Natural killer cell (primary cell): ENCODE measurements at regions of chr6 and their contacts with region 1.

Region 1: GRCh38 chr6:163501026-163501425 is 86.5 kb downstream of the QKI start:
- DNase-seq: no peak
- ATAC-seq: no peak
- H3K4me3 ChIP-seq: no peak overlapping the region
- H3K4me3 Mint-ChIP-seq: no peak overlapping the region
- H3K27ac ChIP-seq: no peak overlapping the region
- H3K27ac Mint-ChIP-seq: no peak overlapping the region
- H3K4me1 ChIP-seq: no peaks in the 10 kb centered on the region
- H3K4me1 Mint-ChIP-seq: peaks cover 57 to 63% of the 10 kb centered on the region in 2 donors
- H3K27me3 ChIP-seq: no peaks in the 10 kb centered on the region
- H3K27me3 Mint-ChIP-seq: no peaks in the 10 kb centered on the region
- CTCF ChIP-seq: no peak

Region 2: DNA sequence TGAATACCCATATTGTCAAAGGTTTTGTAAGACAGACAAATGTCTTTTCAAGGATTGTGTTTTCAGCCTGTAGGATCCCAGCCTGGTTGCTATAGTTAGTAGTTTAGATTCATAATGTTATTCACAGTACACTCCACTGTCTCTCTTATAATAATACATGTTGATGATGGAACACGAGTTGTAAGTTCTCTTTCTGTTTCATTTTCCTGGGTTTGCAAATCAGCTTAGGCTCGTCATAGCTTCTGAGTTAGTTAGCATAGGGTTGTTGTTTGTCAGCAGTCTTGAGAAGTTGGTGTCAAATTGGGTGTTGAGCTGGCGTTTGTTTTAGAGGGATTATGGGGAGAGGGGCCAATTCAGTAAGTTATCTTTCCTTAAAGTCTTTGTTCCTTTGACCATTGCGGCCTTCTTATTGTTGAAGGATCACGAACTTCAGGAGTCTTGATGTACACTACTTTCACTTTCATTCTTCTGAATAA is 40.7 kb before region 1 on chr6:
- intact Hi-C with region 1: loop called (anchors 5 kb)
- DNase-seq: peak; percentile 19 to 70
- ATAC-seq: peak; percentile 87 to 92 (median 88)
- H3K4me3 ChIP-seq: peak overlapping the region; percentile 49
- H3K4me3 Mint-ChIP-seq: peak overlapping the region; percentile 94
- H3K27ac ChIP-seq: peak overlapping the region; percentile 91
- H3K27ac Mint-ChIP-seq: peak overlapping the region; percentile 93 to 96
- H3K4me1 ChIP-seq: peaks cover 9% of the 10 kb centered on the region
- H3K4me1 Mint-ChIP-seq: peaks cover 67 to 70% of the 10 kb centered on the region in 2 donors
- H3K27me3 ChIP-seq: no peaks in the 10 kb centered on the region
- H3K27me3 Mint-ChIP-seq: no peaks in the 10 kb centered on the region
- CTCF ChIP-seq: no peak